Caco-2 (cell line): ENCODE measurements at regions of chr17 and their contacts with region 1.

Region 1: GRCh38 chr17:27879987-27880608 is 13.1 kb downstream of the LYRM9 start:
- DNase-seq: peak; percentile 89 to 95
- H3K4me3 ChIP-seq: no peak overlapping the region
- H3K4me3 Mint-ChIP-seq: no peak overlapping the region
- H3K27ac Mint-ChIP-seq: peak overlapping the region; percentile 10
- H3K4me1 ChIP-seq: no peaks in the 10 kb centered on the region
- H3K4me1 Mint-ChIP-seq: peaks cover 10% of the 10 kb centered on the region
- H3K27me3 ChIP-seq: no peaks in the 10 kb centered on the region
- H3K27me3 Mint-ChIP-seq: no peaks in the 10 kb centered on the region
- CTCF ChIP-seq: peak; percentile 99 to 100

Region 2: GRCh38 chr17:27609611-27610303 is 270.3 kb before region 1 on chr17:
- CTCF ChIA-PET with region 1: interaction called, 5 read pairs
- POLR2A ChIA-PET with region 1: no interaction called
- intact Hi-C with region 1: loop called (anchors 2 kb)
- DNase-seq: peak; percentile 75 to 79
- H3K4me3 ChIP-seq: no peak overlapping the region
- H3K4me3 Mint-ChIP-seq: no peak overlapping the region
- H3K27ac Mint-ChIP-seq: no peak overlapping the region
- H3K4me1 ChIP-seq: no peaks in the 10 kb centered on the region
- H3K4me1 Mint-ChIP-seq: no peaks in the 10 kb centered on the region
- H3K27me3 ChIP-seq: no peaks in the 10 kb centered on the region
- H3K27me3 Mint-ChIP-seq: no peaks in the 10 kb centered on the region
- CTCF ChIP-seq: peak; percentile 84 to 99

Region 3: GRCh38 chr17:27760069-27760885 is 119.8 kb before region 1 on chr17:
- CTCF ChIA-PET with region 1: interaction called, 202 read pairs
- POLR2A ChIA-PET with region 1: no interaction called
- intact Hi-C with region 1: loop called (anchors 1 kb)
- DNase-seq: peak; percentile 85 to 92
- H3K4me3 ChIP-seq: no peak overlapping the region
- H3K4me3 Mint-ChIP-seq: no peak overlapping the region
- H3K27ac Mint-ChIP-seq: no peak overlapping the region
- H3K4me1 ChIP-seq: no peaks in the 10 kb centered on the region
- H3K4me1 Mint-ChIP-seq: no peaks in the 10 kb centered on the region
- H3K27me3 ChIP-seq: no peaks in the 10 kb centered on the region
- H3K27me3 Mint-ChIP-seq: no peaks in the 10 kb centered on the region
- CTCF ChIP-seq: peak; percentile 97 to 100

Region 4: DNA sequence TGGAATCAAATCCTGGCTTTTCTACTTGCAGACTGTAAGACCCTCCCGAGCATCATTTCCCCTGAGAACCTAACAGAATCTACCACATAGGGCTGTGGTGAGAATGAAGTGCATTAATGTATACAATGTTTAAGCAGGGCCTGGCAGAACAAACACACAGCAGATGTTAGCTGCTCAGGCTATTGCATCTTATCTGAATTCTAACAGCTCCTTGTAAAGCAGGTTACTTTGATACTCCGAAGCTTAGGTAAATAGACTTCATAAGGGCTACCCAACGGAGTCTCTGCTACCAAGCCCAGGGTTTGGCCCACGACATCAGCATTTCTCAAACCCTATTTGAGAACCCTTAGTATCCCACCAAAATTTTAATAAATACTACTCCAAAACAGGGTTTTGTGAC is 55.4 kb before region 1 on chr17:
- CTCF ChIA-PET with region 1: interaction called, 11 read pairs
- POLR2A ChIA-PET with region 1: no interaction called
- intact Hi-C with region 1: no loop called
- DNase-seq: peak; percentile 66 to 70
- H3K4me3 ChIP-seq: no peak overlapping the region
- H3K4me3 Mint-ChIP-seq: no peak overlapping the region
- H3K27ac Mint-ChIP-seq: no peak overlapping the region
- H3K4me1 ChIP-seq: peaks cover 16% of the 10 kb centered on the region
- H3K4me1 Mint-ChIP-seq: peaks cover 25% of the 10 kb centered on the region
- H3K27me3 ChIP-seq: no peaks in the 10 kb centered on the region
- H3K27me3 Mint-ChIP-seq: no peaks in the 10 kb centered on the region
- CTCF ChIP-seq: no peak

Region 5: DNA sequence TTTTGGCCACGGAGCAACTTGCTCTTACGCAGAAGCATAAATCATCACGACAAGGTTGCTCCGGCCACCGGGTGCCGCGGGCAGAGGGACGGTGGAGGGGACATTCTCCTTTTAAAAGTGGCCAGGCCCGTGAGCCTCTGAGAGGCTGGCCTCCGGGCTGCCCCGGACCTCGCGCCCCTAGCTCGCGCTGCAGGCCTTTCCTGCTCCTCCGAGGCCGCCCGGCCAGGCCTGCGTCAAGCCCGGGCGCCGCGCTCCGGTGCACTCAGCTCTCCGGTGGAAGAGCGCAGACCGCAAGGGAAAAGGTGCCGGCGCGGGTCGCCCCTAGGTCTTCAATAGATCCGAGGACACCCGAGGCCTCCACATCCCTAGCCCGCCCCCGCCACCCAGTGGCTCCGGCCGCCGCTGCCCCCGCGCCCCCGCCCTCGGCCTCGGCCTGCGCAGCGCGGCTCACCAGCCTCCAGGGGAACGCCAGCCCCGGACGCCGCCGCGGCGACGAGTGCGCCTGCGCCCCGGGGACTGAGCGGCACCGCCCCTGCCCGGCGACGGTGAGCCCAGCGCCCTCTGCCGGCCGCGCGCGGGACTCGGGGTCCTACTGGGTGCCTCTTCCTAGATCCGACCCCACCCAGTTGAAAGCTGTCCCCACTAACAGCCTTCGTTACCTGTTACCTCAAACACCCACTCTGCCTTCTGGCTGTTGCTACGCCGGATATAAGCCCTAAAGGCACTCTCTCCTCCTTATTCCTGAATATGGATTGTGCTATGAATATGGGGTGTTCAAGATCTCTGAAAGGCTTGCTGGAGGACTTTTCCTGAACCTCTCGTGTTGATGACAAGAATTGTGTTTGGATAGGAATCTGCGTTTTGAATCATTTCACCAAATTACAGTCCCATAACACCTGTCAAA is 13.0 kb after region 1 on chr17 and contains the start of gene LYRM9:
- CTCF ChIA-PET with region 1: interaction called, 53 read pairs
- POLR2A ChIA-PET with region 1: interaction called, 10 read pairs
- intact Hi-C with region 1: loop called (anchors 1 kb)
- DNase-seq: peak; percentile 98 to 100
- H3K4me3 ChIP-seq: peak within 1 kb of the TSS; percentile 75
- H3K4me3 Mint-ChIP-seq: peak within 1 kb of the TSS; percentile 70
- H3K27ac Mint-ChIP-seq: peak within 1 kb of the TSS; percentile 28
- H3K4me1 ChIP-seq: peaks cover 39% of the 10 kb centered on the region
- H3K4me1 Mint-ChIP-seq: peaks cover 47% of the 10 kb centered on the region
- H3K27me3 ChIP-seq: no peaks in the 10 kb centered on the region
- H3K27me3 Mint-ChIP-seq: no peaks in the 10 kb centered on the region
- CTCF ChIP-seq: peak; percentile 98 to 99
- total RNA-seq, gene LYRM9: 25.6 and 29.1 TPM in 2 replicates